Thyroid gland (tissue), 4 donors: ENCODE measurements at regions of chr7 and their contacts with region 1.

Region 1: DNA sequence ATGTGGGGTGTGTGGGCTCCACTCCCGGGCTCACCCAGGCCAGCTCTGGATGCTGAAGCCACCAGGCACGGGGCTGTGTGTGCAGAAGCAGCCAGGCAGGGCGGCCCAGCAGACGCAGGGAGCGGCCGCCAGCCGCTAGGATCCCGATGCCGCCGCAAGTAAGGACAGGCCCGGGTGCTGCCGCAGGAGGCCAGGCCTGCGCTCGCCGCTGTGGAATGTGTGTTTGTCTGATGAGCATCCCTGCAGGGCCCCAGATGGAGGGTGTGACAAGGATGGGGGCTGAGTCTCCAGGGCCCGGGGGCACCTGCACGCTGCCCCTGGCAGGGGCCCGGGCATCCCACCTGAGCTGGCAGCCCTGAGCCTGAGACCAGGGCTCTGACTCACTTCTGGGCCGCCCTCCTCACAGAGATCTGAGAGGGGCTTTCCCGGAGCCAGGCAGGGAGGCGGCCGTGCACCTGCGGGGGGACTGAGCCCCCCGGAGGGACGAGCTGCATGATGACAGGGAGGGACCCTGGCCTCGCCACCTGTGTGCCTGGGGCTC is 101.5 kb downstream of the FOXL3 start:
- DNase-seq: no peak
- H3K4me3 ChIP-seq: no peak overlapping the region
- H3K27ac ChIP-seq: no peak overlapping the region
- H3K4me1 ChIP-seq: peaks cover 8 to 9% of the 10 kb centered on the region in 2 donors
- H3K27me3 ChIP-seq: no peaks in the 10 kb centered on the region
- CTCF ChIP-seq: no peak
- POLR2A ChIP-seq: no peak

Region 2: GRCh38 chr7:485188-486081 is 94.0 kb after region 1 on chr7:
- intact Hi-C with region 1: no loop called
- DNase-seq: no peak
- H3K4me3 ChIP-seq: no peak overlapping the region
- H3K27ac ChIP-seq: no peak overlapping the region
- H3K4me1 ChIP-seq: no peaks in the 10 kb centered on the region
- H3K27me3 ChIP-seq: no peaks in the 10 kb centered on the region
- CTCF ChIP-seq: no peak
- POLR2A ChIP-seq: no peak

Region 3: GRCh38 chr7:503575-504111 is 112.2 kb after region 1 on chr7:
- intact Hi-C with region 1: loop called (anchors 10 kb)
- DNase-seq: no peak
- H3K4me3 ChIP-seq: no peak overlapping the region
- H3K27ac ChIP-seq: no peak overlapping the region
- H3K4me1 ChIP-seq: no peaks in the 10 kb centered on the region
- H3K27me3 ChIP-seq: no peaks in the 10 kb centered on the region
- CTCF ChIP-seq: no peak
- POLR2A ChIP-seq: no peak